ENCODE measurements at regions of chrX and their contacts with region 1.

Region 1: DNA sequence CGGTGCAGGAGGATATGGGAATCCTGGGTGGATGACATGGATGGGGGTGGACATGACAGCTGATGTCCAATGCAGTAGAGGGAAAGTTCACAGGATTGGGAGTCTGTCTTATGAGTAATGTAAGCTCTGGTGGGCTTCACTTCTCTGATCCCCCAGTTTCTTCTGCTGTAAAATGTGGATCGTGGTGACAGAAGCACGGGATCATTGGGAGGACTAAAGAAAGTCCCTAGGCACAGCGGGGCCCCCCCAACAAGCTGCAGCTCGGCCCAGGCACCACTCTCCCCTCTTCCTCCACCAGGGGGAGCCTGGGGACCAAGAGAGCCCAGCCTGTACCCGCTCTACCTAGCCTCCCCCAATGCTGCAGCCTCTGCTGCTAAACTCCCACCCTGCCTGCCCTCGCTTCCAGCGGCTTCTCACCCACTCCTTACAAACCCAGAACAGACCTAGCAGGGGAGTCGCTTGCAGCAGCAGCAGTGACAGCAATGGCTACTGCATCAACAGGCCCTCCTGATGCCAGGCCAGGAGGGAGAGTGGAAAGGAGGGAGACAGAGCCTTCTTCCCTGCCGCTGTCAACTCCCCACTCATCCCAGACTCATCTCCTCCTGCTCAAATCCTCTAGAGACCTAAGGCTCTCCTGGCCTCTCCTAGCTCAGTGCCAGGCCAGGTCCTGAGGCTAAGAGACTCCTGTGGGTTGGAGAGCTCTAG is 36.1 kb upstream of the IQSEC2 start:
- H3K4me3 ChIP-seq: no peak overlapping the region
- H3K27ac ChIP-seq: peak overlapping the region; percentile 38; the same call in 1 of the 2 replicates
- H3K4me1 ChIP-seq: peaks cover 32% of the 10 kb centered on the region
- CTCF ChIP-seq: peak; percentile 96

Region 2: GRCh38 chrX:53294024-53294648 is 23.4 kb before region 1 on chrX:
- CTCF ChIA-PET with region 1: interaction called, 60 read pairs
- POLR2A ChIA-PET with region 1: no interaction called
- H3K4me3 ChIP-seq: no peak overlapping the region
- H3K27ac ChIP-seq: no peak overlapping the region
- H3K4me1 ChIP-seq: no peaks in the 10 kb centered on the region
- CTCF ChIP-seq: peak; percentile 30; the same call in 1 of the 2 replicates

Region 3: GRCh38 chrX:53305996-53306937 is 11.2 kb before region 1 on chrX:
- CTCF ChIA-PET with region 1: interaction called, 37 read pairs
- POLR2A ChIA-PET with region 1: no interaction called
- H3K4me3 ChIP-seq: no peak overlapping the region
- H3K27ac ChIP-seq: no peak overlapping the region
- H3K4me1 ChIP-seq: no peaks in the 10 kb centered on the region
- CTCF ChIP-seq: no peak

Region 4: DNA sequence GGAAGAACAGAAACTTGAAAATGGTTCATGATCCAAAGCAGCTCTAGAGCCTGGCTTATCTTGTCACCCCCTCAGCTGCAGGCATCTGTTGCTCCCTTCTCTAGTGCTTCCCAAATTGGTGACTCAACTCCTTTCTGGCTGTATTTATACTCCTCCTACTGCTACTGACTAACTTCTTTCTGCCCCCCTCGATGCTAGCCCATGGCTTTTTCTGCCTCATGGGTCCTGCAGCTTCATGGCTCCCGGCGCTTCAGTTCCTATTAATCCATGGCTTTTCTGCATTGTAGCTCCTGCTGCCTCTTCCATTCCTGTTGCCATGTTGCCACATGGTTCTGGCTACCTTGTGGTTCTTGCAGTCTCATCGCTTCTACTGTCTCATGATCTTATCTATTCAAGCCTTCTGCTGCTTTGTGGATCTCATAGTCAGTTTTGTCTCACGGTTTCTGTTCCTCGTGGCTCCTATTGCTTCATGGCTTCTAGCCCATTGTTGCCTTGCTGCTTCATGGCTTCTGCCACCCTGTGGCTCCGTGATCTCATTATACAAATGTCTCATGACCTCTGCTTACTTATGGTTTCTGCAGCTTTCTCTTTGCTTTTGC is 56.8 kb after region 1 on chrX:
- CTCF ChIA-PET with region 1: interaction called, 13 read pairs
- POLR2A ChIA-PET with region 1: no interaction called
- H3K4me3 ChIP-seq: no peak overlapping the region
- H3K27ac ChIP-seq: no peak overlapping the region
- H3K4me1 ChIP-seq: no peaks in the 10 kb centered on the region
- CTCF ChIP-seq: no peak; the same call in 1 of the 2 replicates

Region 5: GRCh38 chrX:53422086-53422860 is 104.8 kb after region 1 on chrX and contains the start of gene SMC1A:
- CTCF ChIA-PET with region 1: interaction called, 29 read pairs
- POLR2A ChIA-PET with region 1: interaction called, 13 read pairs
- H3K4me3 ChIP-seq: peak within 1 kb of the TSS; percentile 76
- H3K27ac ChIP-seq: peak within 1 kb of the TSS; percentile 99
- H3K4me1 ChIP-seq: peaks cover 6% of the 10 kb centered on the region
- CTCF ChIP-seq: peak; percentile 30; the same call in 1 of the 2 replicates

Region 6: DNA sequence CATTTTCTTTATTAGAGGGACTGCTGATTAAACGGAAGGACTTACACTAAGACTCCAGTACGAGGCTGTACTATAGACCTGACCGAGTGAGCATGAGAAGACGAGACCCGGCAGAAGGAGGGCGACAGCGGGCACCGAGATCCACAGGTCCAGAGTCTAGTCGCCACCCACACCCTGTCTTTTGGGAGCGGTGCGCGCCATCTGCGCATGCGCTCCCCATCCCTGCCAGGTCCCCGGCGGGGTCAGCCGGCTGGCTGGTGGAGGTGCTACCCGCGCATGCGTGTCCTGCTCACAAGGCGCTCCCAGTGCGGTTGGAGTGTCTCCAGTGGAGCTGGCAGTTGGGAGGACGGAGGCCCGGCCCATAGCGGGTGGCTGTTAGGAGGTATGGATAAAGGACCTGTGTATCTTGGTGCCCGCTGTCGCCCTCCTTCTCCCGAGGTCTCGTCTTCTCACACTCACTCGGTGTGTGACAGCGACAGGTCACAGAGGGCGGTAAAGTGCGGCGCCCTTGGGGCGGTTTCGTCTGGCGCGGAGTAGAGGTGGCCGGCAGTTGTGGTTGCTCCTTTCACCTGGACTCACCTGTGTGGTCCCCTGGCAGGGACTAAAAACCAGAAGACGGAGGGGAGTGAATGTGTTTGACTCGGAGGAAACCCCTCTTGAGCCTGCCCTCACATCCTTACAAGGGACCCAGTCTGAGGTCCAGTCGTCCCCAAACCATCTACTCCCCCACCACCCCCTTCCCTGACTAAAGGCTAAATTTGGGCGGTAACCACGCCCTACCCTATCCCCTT is 124.2 kb after region 1 on chrX:
- CTCF ChIA-PET with region 1: interaction called, 131 read pairs
- POLR2A ChIA-PET with region 1: interaction called, 4 read pairs
- H3K4me3 ChIP-seq: peak overlapping the region; percentile 48
- H3K27ac ChIP-seq: peak overlapping the region; percentile 61; the same call in 1 of the 2 replicates
- H3K4me1 ChIP-seq: peaks cover 3% of the 10 kb centered on the region; the same call in 1 of the 2 replicates
- CTCF ChIP-seq: no peak

Region 7: GRCh38 chrX:53631156-53631555 is 313.6 kb after region 1 on chrX:
- CTCF ChIA-PET with region 1: no interaction called
- POLR2A ChIA-PET with region 1: no interaction called
- H3K4me3 ChIP-seq: no peak overlapping the region
- H3K27ac ChIP-seq: no peak overlapping the region
- H3K4me1 ChIP-seq: no peaks in the 10 kb centered on the region
- CTCF ChIP-seq: no peak